Activated CD4-positive, alpha-beta T cell treated with anti-CD3 and anti-CD28 coated beads, Interleukin-2, amount 10 ng/mL, durations not matched to agents 24 days and 14 days (primary cell): ENCODE measurements at regions of chr2 and their contacts with region 1.

Region 1: DNA sequence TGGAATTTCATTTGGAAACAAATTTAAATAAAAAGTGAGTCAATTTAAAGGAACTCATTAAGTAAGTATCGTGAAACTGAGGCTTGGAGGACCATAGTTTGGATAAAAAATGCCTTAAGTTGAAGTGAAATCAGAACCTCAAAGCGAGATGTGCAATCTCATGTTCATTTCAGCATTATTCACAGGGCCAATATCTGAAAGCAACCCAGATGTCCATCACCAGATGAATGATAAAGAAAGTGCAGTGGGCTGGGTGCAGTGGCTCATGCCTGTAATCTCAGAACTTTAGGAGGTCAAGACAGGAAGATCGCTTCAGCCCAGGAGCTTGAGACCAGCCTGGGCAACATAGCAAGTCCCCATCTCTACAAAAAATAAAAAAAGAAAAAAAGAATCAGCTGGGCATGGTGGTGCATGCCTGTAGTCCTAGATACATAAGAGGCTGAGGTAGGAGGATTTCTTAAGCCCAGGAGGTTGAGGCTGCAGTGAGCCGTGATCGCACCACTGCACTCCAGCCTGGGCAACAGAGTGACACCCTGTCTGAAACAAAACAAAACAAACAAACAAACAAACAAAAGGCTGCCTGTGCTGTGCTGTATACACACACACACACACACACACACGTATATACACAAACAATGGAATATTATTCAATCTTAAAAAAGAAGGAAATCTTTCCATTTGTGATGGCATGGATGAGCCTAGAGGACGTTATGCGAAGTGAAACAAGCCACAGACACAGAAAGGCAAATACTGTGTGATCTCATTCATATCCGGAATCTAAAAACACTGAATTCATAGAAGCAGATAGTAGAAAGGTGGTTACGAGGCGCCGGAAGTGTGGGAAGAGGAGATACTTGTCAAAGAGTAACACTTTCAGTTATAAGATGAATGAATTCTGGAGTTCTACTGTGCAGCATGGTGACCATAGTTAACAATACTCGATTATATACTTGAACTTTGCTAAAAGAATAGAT is 14.5 kb downstream of the SH3RF3 start:
- DNase-seq: peak; percentile 89
- H3K4me3 Mint-ChIP-seq: peak overlapping the region; percentile 60
- H3K27ac Mint-ChIP-seq: peak overlapping the region; percentile 76
- H3K4me1 Mint-ChIP-seq: peaks cover 42% of the 10 kb centered on the region
- H3K27me3 Mint-ChIP-seq: peaks cover 48% of the 10 kb centered on the region

Region 2: GRCh38 chr2:108944601-108945331 is 198.7 kb before region 1 on chr2:
- intact Hi-C with region 1: no loop called
- DNase-seq: no peak
- H3K4me3 Mint-ChIP-seq: no peak overlapping the region
- H3K27ac Mint-ChIP-seq: no peak overlapping the region
- H3K4me1 Mint-ChIP-seq: no peaks in the 10 kb centered on the region
- H3K27me3 Mint-ChIP-seq: no peaks in the 10 kb centered on the region

Region 3: DNA sequence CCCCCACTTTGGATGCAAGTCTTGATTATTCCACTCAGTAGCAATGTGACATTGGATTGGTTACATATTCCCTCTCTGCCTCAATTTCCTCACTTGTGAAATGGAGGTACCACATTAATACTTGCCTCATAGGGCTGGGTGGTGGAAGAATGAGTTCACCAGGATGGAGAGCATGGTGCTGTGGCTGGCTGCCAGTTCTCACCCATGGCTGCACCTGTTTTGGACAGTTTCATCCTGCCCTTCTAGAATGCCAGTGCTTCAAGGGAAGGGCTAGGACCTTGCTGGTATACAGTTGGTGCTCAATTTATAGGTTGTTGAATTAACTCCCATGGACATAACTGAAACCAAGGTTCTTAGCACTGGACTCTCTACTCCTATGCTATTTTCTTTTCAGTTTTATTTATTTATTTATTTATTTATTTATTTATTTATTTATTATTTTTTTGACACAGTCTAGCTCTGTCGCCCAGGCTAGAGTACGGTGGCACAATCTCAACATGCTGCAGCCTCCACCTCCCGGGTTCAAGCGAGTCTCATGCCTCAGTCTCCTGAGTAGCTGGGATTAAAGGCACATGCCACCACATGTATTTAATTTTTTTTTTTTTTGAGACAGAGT is 19.8 kb before region 1 on chr2:
- intact Hi-C with region 1: no loop called
- DNase-seq: no peak
- H3K4me3 Mint-ChIP-seq: no peak overlapping the region
- H3K27ac Mint-ChIP-seq: no peak overlapping the region
- H3K4me1 Mint-ChIP-seq: peaks cover 15% of the 10 kb centered on the region
- H3K27me3 Mint-ChIP-seq: peaks cover 32% of the 10 kb centered on the region

Region 4: DNA sequence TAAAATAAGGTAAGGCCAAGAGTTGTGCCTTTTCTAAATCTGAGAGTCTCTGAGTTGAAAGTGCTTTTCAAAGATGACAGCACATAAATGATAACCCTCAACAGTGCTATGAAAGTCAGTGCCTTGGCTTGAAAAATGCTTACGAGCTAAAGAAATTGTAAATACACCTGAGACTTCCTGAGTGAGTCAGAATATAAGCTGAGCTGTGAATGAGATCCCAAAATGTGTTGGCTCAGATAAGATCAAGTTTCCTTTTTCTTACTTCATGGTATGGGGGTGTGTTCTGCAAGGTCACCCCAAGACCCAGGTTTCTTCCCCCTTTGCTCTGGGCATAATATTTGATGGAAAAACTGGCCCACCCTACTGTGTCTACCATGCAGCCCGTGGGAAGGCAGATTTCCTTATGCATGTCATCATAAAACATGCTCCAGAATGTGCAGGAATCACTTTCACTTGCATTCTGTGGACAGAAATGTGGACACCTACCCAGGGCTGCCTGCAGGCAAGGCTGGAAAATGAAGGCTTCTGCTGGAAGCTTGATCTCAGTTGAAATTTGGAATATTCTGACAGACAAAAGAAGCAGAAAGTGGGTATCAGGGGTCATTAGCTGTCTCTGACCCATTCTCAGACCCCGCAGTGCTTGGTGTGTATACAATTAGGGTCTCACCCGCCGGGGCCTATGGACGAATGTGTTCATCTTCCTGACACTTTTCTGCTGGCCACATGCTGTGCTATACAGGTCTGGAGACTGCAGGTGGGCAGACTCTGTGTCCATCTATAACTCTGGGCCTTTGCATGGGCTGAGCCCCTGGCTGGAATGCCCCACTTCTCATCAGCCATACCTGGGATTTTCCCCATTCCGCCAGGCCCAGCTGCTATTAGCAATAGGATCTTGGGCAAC is 198.1 kb after region 1 on chr2:
- intact Hi-C with region 1: loop called (anchors 5 kb)
- DNase-seq: no peak
- H3K4me3 Mint-ChIP-seq: no peak overlapping the region
- H3K27ac Mint-ChIP-seq: no peak overlapping the region
- H3K4me1 Mint-ChIP-seq: peaks cover 14% of the 10 kb centered on the region
- H3K27me3 Mint-ChIP-seq: peaks cover 19% of the 10 kb centered on the region

Region 5: DNA sequence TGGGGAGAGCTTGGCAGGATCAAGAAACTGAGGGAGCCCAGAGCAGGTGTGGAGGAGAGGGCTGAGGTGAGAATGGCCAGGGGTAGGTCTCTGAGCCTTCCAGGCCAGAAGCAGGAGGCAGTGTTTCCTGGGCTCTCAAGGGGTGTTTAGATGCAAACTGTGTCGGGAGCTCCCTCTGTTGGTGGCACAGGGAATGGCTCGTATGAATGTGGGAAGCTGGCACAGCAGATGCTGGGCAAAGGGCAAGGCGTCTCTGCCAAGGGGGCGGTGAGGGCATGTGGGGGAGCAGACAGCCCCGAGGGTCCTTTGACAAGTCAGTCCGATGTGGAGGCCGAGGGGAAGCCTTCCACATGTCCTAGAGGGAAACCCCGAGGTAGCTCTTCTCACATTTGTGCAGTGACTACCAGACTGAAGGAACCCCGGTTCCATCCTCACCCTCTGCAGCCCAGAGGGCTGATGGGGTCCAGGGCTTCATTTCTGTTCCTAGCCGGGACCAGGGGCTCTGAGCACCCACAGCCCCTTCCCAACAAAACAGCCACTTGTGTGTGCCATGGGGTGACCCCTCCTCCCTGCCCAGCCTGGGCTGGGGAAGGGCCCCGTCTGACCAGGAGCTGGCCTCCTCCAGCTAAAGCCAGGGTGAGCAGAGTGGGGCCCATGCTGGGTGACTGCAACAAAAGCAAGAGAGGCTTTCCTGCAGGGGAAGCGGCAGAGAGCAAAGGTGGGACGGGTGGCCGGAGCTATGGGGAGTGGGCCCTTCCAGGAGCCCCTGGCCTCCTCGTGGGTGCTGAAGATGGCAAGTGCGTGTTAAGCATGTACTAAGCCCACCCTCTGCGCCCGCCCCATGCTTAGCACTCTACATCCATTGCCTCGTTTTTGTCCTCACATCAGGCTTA is 366.9 kb after region 1 on chr2:
- intact Hi-C with region 1: loop called (anchors 5 kb)
- DNase-seq: peak; percentile 92
- H3K4me3 Mint-ChIP-seq: no peak overlapping the region
- H3K27ac Mint-ChIP-seq: no peak overlapping the region
- H3K4me1 Mint-ChIP-seq: no peaks in the 10 kb centered on the region
- H3K27me3 Mint-ChIP-seq: peaks cover 2% of the 10 kb centered on the region